Endothelial cell of umbilical vein (primary cell): ENCODE measurements at regions of chr22 and their contacts with region 1.

Region 1: DNA sequence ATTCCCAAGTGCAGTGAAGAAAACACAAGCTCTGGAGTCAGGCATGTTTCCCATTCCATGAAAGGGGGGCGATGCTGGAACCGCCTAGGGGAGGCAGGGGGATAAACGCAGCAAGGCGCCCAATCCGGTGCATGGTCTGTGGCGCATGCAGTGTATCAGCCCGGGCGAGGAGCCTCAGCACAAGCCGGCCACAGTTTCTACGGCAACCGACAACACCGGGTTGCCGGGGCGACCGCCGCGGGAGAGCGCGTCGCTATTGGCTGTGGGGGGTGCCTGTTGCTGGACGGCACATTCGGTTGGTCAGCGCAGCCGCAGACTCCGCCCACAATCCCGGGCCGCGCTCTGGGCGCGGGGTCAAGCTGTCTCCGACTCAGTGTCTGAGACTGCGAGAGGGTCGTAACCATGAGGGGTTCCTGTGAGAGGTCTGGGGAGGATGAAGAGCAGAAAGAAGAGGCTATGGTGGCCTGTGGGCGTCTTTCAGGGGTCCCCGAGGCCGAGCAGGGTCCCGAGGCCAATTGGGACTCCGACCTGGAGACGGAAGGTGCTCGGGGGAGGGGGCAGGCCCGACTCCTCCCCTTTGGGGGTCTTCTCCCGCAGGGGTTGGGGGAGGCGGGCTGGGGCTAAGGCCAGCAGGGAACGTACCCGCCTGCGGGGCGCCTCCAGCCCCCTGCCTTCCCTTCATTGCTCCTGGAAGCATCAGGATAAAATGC is at the start of gene LRRC74B:
- DNase-seq: peak; percentile 88
- H3K4me3 ChIP-seq: peak within 1 kb of the TSS in 2 of 3 experiments; percentile 37 to 55
- H3K27ac ChIP-seq: no peak within 1 kb of the TSS
- H3K4me1 ChIP-seq: peaks cover 5% of the 10 kb centered on the region
- H3K27me3 ChIP-seq: no peaks in the 10 kb centered on the region
- CTCF ChIP-seq: no peak
- POLR2A ChIP-seq: no peak
- total RNA-seq, gene LRRC74B: not detected in 2 replicates

Region 2: GRCh38 chr22:21001560-21002325 is 44.0 kb before region 1 on chr22 and contains the start of gene THAP7:
- CTCF ChIA-PET with region 1: no interaction called
- POLR2A ChIA-PET with region 1: no interaction called
- dilution Hi-C with region 1: no loop called
- intact Hi-C with region 1: loop called (anchors 1 kb)
- DNase-seq: peak; percentile 95
- H3K4me3 ChIP-seq: peak within 1 kb of the TSS; percentile 77 to 86 (median 86)
- H3K27ac ChIP-seq: peak within 1 kb of the TSS; percentile 88
- H3K4me1 ChIP-seq: peaks cover 22% of the 10 kb centered on the region
- H3K27me3 ChIP-seq: no peaks in the 10 kb centered on the region
- CTCF ChIP-seq: no peak
- POLR2A ChIP-seq: peak; percentile 85
- total RNA-seq, gene THAP7: 13.5 and 14.9 TPM in 2 replicates

Region 3: GRCh38 chr22:21014202-21014725 is 31.5 kb before region 1 on chr22:
- CTCF ChIA-PET with region 1: interaction called, 5 read pairs
- POLR2A ChIA-PET with region 1: no interaction called
- dilution Hi-C with region 1: no loop called
- intact Hi-C with region 1: loop called (anchors 2 kb)
- DNase-seq: peak; percentile 91
- H3K4me3 ChIP-seq: peak overlapping the region; percentile 12 to 47 (median 43)
- H3K27ac ChIP-seq: peak overlapping the region; percentile 66
- H3K4me1 ChIP-seq: peaks cover 13% of the 10 kb centered on the region
- H3K27me3 ChIP-seq: no peaks in the 10 kb centered on the region
- CTCF ChIP-seq: no peak
- POLR2A ChIP-seq: no peak

Region 4: DNA sequence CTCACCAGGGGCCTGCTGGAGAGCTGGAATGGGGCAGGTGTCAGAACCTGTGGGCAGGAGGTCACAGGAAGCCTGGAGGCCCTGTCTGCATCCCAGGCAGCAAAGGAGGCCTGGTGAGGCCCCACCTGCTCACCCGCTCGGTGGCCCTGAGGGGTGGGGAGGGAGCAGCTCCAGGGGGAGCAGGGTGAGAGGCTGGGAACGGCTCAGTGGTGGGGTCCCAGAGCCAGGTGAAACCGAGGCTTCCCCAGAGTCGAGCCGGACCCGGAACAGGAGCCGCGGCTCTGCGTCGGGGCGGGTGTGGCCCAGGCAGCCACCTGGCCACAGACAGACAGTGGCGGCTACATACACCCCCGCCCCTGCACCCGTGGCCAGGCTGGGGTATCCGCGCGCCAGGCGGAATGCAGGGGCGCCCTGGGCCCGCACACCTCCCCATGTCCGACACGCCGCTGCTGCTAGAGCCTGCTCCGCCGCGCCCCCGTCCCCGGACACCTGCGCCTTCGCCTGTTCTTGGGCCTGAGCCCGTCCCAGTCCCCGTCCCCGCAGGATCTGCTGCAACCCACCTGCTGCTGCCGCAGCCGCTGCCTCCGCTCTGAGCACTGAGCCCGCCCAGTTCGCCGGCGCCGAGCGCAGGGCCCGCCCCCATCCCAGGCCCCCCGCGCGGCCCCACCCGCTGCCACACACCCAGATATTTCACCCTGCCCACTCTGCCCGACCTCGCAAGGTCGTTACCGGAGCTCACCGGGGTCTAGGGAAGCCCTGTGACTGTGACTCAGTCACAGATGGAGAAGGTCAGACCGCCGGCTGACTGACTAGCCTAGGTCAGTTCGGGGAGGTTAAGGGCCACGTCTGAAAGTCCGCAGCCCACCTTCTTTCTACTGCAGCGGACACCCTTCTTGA is 13.5 kb before region 1 on chr22 and contains the start of gene SLC7A4:
- CTCF ChIA-PET with region 1: no interaction called
- POLR2A ChIA-PET with region 1: no interaction called
- dilution Hi-C with region 1: no loop called
- intact Hi-C with region 1: no loop called
- DNase-seq: no peak
- H3K4me3 ChIP-seq: no peak within 1 kb of the TSS
- H3K27ac ChIP-seq: no peak within 1 kb of the TSS
- H3K4me1 ChIP-seq: no peaks in the 10 kb centered on the region
- H3K27me3 ChIP-seq: peaks cover 26 to 27% of the 10 kb centered on the region in 2 experiments
- CTCF ChIP-seq: no peak
- POLR2A ChIP-seq: no peak
- total RNA-seq, gene SLC7A4: not detected in 2 replicates